CD14-positive monocyte (primary cell): ENCODE measurements at regions of chr10 and their contacts with region 1.

Region 1: GRCh38 chr10:34637418-34637911 is 177.6 kb downstream of the PARD3 start:
- DNase-seq: peak; percentile 23 to 58 (median 25)
- H3K4me3 ChIP-seq: peak overlapping the region in 1 of 3 experiments; percentile 42
- H3K4me3 Mint-ChIP-seq: peak overlapping the region; percentile 71 to 79
- H3K27ac ChIP-seq: no peak overlapping the region
- H3K27ac Mint-ChIP-seq: no peak overlapping the region
- H3K4me1 ChIP-seq: peaks cover 15 to 16% of the 10 kb centered on the region in 2 donors
- H3K4me1 Mint-ChIP-seq: peaks cover 19% of the 10 kb centered on the region
- H3K27me3 ChIP-seq: no peaks in the 10 kb centered on the region
- H3K27me3 Mint-ChIP-seq: peaks cover 2 to 4% (median 2%) of the 10 kb centered on the region in 3 donors
- CTCF ChIP-seq: peak; percentile 94

Region 2: DNA sequence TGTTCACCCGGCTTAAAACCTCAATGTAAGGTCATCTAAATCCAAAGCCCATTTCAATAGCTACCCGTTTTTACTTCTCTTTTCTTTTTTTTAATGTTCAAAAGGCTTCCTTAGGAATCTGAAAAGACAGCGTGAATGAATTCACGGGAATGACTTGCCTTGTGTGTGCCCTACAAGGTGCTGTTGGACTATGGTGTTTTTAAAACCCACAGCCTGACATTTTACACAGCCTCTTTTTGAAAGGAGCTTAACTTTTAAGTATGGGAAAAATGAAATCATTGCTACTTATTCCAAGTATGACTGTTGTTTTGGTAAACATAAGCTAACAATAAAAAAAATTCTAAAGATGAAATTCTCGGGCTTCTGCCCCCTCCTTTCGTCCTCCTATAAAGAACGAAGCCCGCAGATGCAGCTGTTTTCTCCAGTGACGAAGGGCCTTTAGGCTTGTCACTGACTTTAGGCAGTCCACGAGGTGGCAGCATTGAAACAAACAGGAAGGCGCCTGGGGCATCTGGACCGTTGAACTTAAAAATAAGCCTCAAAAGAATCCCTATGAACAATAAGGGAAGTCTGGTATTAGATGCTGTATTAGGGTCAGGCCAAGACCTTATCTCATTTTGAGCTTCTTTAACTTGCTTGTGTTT is 1444.3 kb before region 1 on chr10:
- intact Hi-C with region 1: loop called (anchors 5 kb)
- DNase-seq: peak; percentile 30 to 58 (median 55)
- H3K4me3 ChIP-seq: no peak overlapping the region
- H3K4me3 Mint-ChIP-seq: peak overlapping the region in 1 of 2 donors; percentile 31
- H3K27ac ChIP-seq: no peak overlapping the region
- H3K27ac Mint-ChIP-seq: no peak overlapping the region
- H3K4me1 ChIP-seq: peaks cover 14 to 17% of the 10 kb centered on the region in 2 donors
- H3K4me1 Mint-ChIP-seq: peaks cover 12% of the 10 kb centered on the region
- H3K27me3 ChIP-seq: no peaks in the 10 kb centered on the region
- H3K27me3 Mint-ChIP-seq: peaks cover 4 to 25% (median 11%) of the 10 kb centered on the region in 3 donors
- CTCF ChIP-seq: peak; percentile 63

Region 3: GRCh38 chr10:33321513-33321912 is 1316.0 kb before region 1 on chr10:
- intact Hi-C with region 1: loop called in 1 of 2 experiments (anchors 5 kb)
- DNase-seq: no peak
- H3K4me3 ChIP-seq: no peak overlapping the region
- H3K4me3 Mint-ChIP-seq: no peak overlapping the region
- H3K27ac ChIP-seq: no peak overlapping the region
- H3K27ac Mint-ChIP-seq: no peak overlapping the region
- H3K4me1 ChIP-seq: no peaks in the 10 kb centered on the region
- H3K4me1 Mint-ChIP-seq: no peaks in the 10 kb centered on the region
- H3K27me3 ChIP-seq: peaks cover 0 to 2% of the 10 kb centered on the region in 2 donors
- H3K27me3 Mint-ChIP-seq: peaks cover 3 to 7% (median 6%) of the 10 kb centered on the region in 3 donors
- CTCF ChIP-seq: no peak

Region 4: DNA sequence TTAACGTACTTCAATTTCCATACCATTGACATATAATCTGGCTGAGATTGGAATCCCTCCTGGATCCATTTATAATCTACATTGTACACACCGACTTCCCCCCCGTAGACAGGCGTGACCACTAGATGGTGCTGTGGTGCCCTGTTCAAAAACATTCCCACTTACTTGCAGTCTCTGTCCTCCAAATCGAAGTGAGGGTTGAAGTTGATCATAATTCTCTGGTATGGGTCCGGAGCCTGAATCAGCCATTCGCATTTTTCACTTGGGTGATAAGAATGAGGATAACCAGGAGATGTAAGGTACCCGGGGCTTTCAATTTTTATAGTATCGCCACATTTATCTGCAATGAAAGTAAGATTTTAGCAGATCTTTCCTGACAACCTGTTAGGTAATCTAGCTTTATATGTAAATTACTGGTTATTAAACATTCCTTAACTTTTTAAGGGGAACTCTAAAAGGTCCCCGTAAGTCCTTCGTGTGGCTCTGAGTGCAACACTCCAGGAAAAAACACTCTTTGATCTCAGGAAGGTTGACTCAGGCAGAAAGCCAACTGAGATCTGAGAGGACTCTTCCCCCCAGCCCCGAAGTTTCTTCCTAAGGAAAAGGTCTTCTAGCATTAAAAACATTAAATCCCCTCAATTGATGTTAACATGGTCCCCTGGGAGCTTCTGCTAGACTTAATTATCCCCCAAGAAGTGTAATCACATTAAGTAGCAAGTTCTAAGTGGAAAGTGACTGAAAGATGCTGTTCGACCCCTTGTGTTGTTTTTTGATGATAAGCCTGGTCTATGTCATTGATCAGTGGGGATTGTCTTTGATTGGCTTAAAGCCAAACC is 1306.7 kb before region 1 on chr10:
- intact Hi-C with region 1: loop called (anchors 2 to 5 kb)
- DNase-seq: peak; percentile 52 to 76 (median 64)
- H3K4me3 ChIP-seq: no peak overlapping the region
- H3K4me3 Mint-ChIP-seq: peak overlapping the region in 1 of 2 donors; percentile 72
- H3K27ac ChIP-seq: no peak overlapping the region
- H3K27ac Mint-ChIP-seq: no peak overlapping the region
- H3K4me1 ChIP-seq: peaks cover 19 to 23% of the 10 kb centered on the region in 2 donors
- H3K4me1 Mint-ChIP-seq: peaks cover 15% of the 10 kb centered on the region
- H3K27me3 ChIP-seq: peaks cover 36 to 45% of the 10 kb centered on the region in 2 donors
- H3K27me3 Mint-ChIP-seq: peaks cover 35 to 51% (median 37%) of the 10 kb centered on the region in 3 donors
- CTCF ChIP-seq: peak; percentile 95

Region 5: DNA sequence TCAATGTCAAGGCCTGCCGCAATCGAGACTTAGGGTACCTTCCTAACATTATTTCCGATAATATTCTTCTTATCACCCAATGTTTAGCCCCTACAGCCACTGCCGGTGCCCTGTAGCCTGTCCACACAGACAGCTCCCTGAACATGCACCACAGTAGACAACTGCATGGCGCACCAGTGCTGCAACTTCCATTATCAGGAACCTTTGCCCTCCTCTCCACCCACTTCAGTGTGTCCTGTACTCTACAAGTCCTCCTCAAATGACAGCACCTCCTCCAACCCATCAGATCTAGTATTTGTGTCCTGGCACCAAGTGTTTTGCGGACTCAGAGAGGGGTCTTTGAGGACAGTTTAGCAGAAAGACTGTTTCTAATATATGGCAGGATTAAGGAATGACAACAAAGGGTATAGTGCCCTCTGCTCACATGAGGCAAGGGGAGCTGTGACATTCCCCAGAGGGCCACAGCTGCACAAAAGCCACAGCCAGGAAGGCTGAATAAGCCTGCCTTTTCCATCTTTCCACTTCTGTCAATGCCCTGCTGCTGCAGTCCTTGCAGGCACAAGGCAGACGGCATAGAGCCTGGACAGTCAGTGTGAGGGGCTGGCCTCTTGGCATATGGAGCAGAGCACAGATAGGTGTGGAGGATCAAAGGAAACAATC is 157.8 kb before region 1 on chr10:
- intact Hi-C with region 1: no loop called
- DNase-seq: no peak
- H3K4me3 ChIP-seq: no peak overlapping the region
- H3K4me3 Mint-ChIP-seq: no peak overlapping the region
- H3K27ac ChIP-seq: no peak overlapping the region
- H3K27ac Mint-ChIP-seq: no peak overlapping the region
- H3K4me1 ChIP-seq: no peaks in the 10 kb centered on the region
- H3K4me1 Mint-ChIP-seq: no peaks in the 10 kb centered on the region
- H3K27me3 ChIP-seq: no peaks in the 10 kb centered on the region
- H3K27me3 Mint-ChIP-seq: peaks cover 0 to 4% (median 0%) of the 10 kb centered on the region in 3 donors
- CTCF ChIP-seq: no peak

Region 6: DNA sequence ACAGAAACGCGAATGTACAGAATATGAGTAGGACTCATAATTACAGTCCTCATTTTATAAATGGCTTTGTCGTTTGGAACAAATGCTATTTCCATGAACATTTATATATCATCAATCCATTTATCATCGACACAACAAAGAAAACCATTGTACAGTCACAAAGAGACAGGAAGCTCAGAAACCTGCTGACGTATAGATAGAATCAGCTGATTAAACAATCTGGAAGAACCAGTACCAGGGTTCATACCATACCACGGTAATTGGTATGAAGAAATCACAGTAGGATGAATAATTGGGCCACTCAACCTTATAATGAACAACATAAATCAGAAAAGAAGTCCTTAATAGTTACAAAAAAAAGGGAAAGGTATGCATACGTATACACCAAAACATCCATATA is 117.4 kb before region 1 on chr10:
- intact Hi-C with region 1: no loop called
- DNase-seq: no peak
- H3K4me3 ChIP-seq: no peak overlapping the region
- H3K4me3 Mint-ChIP-seq: no peak overlapping the region
- H3K27ac ChIP-seq: no peak overlapping the region
- H3K27ac Mint-ChIP-seq: no peak overlapping the region
- H3K4me1 ChIP-seq: no peaks in the 10 kb centered on the region
- H3K4me1 Mint-ChIP-seq: peaks cover 2% of the 10 kb centered on the region
- H3K27me3 ChIP-seq: no peaks in the 10 kb centered on the region
- H3K27me3 Mint-ChIP-seq: peaks cover 0 to 2% (median 0%) of the 10 kb centered on the region in 3 donors
- CTCF ChIP-seq: no peak